Heart left ventricle (tissue), 16 donors: ENCODE measurements at regions of chr5 and their contacts with region 1.

Region 1: DNA sequence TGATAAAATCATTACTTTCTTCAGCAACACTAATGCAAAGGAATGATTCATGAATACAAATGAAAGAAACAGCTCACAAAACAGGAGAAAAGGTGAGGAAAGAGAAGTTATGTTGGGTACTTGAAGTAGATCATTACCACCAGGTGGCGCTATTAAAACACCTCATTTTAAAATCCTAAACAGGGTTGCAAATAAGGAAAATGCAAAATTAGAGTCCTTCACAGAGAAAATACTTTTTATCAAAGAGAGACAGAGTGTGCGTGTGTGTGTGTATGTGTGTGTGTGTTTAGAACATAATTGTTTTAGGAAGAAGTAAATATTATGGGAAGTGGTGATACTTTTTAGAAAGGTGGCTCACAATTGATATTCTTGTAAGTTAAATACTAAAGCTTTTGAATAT is 49.5 kb upstream of the CD180 start:
- DNase-seq: peak in 1 of 5 donors; percentile 31
- ATAC-seq: peak in 3 of 4 donors; percentile 28 to 55 (median 42)
- H3K4me3 ChIP-seq: no peak overlapping the region
- H3K27ac ChIP-seq: peak overlapping the region in 4 of 12 donors; percentile 32 to 65 (median 32)
- H3K4me1 ChIP-seq: peaks cover 0 to 35% (median 18%) of the 10 kb centered on the region in 12 donors
- H3K27me3 ChIP-seq: no peaks in the 10 kb centered on the region
- CTCF ChIP-seq: peak; percentile 66 to 86 (median 80)
- POLR2A ChIP-seq: no peak

Region 2: GRCh38 chr5:66958980-66959641 is 287.0 kb before region 1 on chr5:
- intact Hi-C with region 1: no loop called
- DNase-seq: peak in 4 of 5 donors; percentile 31 to 64 (median 38)
- ATAC-seq: peak; percentile 63 to 75 (median 67)
- H3K4me3 ChIP-seq: peak overlapping the region; percentile 4 to 65 (median 48)
- H3K27ac ChIP-seq: peak overlapping the region; percentile 51 to 73 (median 66)
- H3K4me1 ChIP-seq: peaks cover 0 to 50% (median 14%) of the 10 kb centered on the region in 12 donors
- H3K27me3 ChIP-seq: no peaks in the 10 kb centered on the region
- CTCF ChIP-seq: no peak
- POLR2A ChIP-seq: no peak

Region 3: DNA sequence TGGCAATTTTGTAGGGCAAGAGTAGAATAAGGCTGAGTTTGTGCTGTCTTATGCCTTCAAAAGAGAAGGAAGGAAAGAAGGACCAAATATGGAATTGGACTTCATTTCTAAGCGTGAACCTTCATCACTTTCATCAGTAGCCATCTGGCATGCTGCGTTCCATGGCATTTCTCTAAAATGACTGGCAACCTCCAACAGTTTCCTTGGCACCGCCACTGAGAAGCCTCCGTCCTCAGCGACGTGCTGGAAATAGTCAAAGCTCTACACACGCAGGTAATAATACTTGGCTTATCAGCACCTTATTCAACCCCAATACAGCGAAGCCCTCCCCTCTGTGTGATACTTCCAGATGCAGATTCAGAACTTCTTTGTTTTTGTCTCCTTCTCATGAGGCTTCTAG is 120.2 kb after region 1 on chr5:
- intact Hi-C with region 1: no loop called
- DNase-seq: no peak
- ATAC-seq: no peak
- H3K4me3 ChIP-seq: no peak overlapping the region
- H3K27ac ChIP-seq: no peak overlapping the region
- H3K4me1 ChIP-seq: no peaks in the 10 kb centered on the region
- H3K27me3 ChIP-seq: no peaks in the 10 kb centered on the region
- CTCF ChIP-seq: no peak
- POLR2A ChIP-seq: no peak

Region 4: DNA sequence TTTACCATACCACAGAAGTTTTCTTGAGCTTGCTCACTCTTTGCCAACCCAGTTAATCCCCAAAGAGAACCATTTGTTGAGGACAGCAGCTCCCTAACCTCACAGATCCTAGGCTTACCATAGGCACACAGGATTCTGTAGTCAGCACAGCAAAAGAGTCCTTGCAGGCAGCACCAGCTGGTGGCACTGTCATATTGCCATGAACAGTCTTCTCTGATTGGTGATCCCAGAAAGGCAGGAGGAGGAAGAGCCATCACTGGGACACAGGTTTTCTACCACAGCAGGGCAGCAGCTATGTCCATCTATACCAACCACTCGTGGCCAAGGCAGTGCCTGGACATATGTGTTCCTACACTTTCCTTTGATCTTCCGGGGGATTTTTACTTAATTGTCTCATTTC is 247.6 kb after region 1 on chr5:
- intact Hi-C with region 1: loop called in 3 of 10 experiments (anchors 5 to 10 kb)
- DNase-seq: peak; percentile 32 to 60 (median 43)
- ATAC-seq: peak; percentile 91 to 96 (median 94)
- H3K4me3 ChIP-seq: no peak overlapping the region
- H3K27ac ChIP-seq: peak overlapping the region in 1 of 12 donors; percentile 63
- H3K4me1 ChIP-seq: peaks cover 0 to 9% (median 0%) of the 10 kb centered on the region in 12 donors
- H3K27me3 ChIP-seq: no peaks in the 10 kb centered on the region
- CTCF ChIP-seq: peak; percentile 20 to 62 (median 46)
- POLR2A ChIP-seq: no peak

Region 5: GRCh38 chr5:67815455-67816391 is 569.6 kb after region 1 on chr5:
- intact Hi-C with region 1: loop called in 1 of 10 experiments (anchors 5 kb)
- DNase-seq: peak in 4 of 5 donors; percentile 31 to 43 (median 38)
- ATAC-seq: peak; percentile 93 to 96 (median 96)
- H3K4me3 ChIP-seq: no peak overlapping the region
- H3K27ac ChIP-seq: peak overlapping the region; percentile 4 to 88 (median 72)
- H3K4me1 ChIP-seq: peaks cover 0 to 32% (median 26%) of the 10 kb centered on the region in 12 donors
- H3K27me3 ChIP-seq: no peaks in the 10 kb centered on the region
- CTCF ChIP-seq: no peak
- POLR2A ChIP-seq: no peak

Region 6: GRCh38 chr5:68272289-68272688 is 1026.2 kb after region 1 on chr5:
- intact Hi-C with region 1: loop called in 5 of 10 experiments (anchors 5 kb)
- DNase-seq: no peak
- ATAC-seq: no peak
- H3K4me3 ChIP-seq: no peak overlapping the region
- H3K27ac ChIP-seq: peak overlapping the region in 9 of 12 donors; percentile 56 to 86 (median 65)
- H3K4me1 ChIP-seq: peaks cover 0 to 90% (median 69%) of the 10 kb centered on the region in 12 donors
- H3K27me3 ChIP-seq: no peaks in the 10 kb centered on the region
- CTCF ChIP-seq: peak in 11 of 12 donors; percentile 27 to 58 (median 42)
- POLR2A ChIP-seq: no peak

Region 7: GRCh38 chr5:68460147-68460798 is 1214.2 kb after region 1 on chr5:
- intact Hi-C with region 1: loop called in 7 of 10 experiments (anchors 5 to 10 kb)
- DNase-seq: peak in 2 of 5 donors; percentile 23 to 46
- ATAC-seq: peak in 3 of 4 donors; percentile 29 to 53 (median 49)
- H3K4me3 ChIP-seq: no peak overlapping the region
- H3K27ac ChIP-seq: no peak overlapping the region
- H3K4me1 ChIP-seq: peaks cover 0 to 19% (median 7%) of the 10 kb centered on the region in 12 donors
- H3K27me3 ChIP-seq: no peaks in the 10 kb centered on the region
- CTCF ChIP-seq: peak; percentile 56 to 85 (median 77)
- POLR2A ChIP-seq: no peak